ENCODE measurements at regions of chr2 and their contacts with region 1.

Region 1: DNA sequence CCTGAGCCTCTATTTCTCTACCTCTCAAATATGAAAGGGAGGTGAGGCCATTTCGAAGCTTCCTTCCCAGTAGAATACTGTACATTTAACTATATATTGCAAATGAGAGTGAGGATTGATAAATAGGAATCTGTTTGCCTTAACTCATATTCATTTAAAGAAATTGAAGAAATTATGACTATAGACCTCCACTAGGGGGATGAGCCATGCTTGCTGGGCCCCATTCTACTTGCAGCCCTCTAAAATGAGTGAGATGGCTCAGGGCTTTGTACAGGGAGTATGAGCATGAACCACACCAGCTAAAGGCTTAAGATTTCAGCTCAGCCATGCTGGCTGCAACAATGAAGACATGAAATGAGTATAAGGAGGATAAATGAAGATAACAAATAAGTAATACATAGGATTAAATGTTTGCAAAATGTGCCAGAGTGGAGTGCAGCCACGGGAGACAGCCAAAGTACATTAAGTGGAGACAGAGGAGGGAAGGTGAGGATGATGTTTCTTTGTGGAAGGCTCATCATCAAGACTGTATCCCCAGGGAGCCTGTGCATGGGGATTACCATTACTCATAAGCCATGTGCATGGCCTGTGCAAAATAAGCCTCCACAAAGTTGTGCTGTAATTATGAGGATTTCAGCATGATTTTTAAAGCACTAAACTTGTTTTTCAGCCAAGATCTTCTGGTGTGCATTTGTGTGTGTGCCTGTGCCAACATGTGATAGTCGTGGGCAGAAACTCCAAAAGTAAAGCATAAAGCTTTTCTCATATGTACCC is 300.8 kb downstream of the CNTNAP5 start:
- DNase-seq: peak; percentile 9
- ATAC-seq: peak; percentile 81
- H3K4me3 ChIP-seq: no peak overlapping the region
- H3K27ac ChIP-seq: no peak overlapping the region
- H3K4me1 ChIP-seq: no peaks in the 10 kb centered on the region
- H3K27me3 ChIP-seq: no peaks in the 10 kb centered on the region
- CTCF ChIP-seq: 0 out of 2 replicates have a peak, but pooled peaks have one; percentile 4
- EP300 ChIP-seq: no peak
- POLR2A ChIP-seq: no peak
- RAD21 ChIP-seq: no peak

Region 2: GRCh38 chr2:124566518-124566970 is 240.7 kb after region 1 on chr2:
- CTCF ChIA-PET with region 1: no interaction called
- POLR2A ChIA-PET with region 1: no interaction called
- in situ Hi-C with region 1: no loop called
- intact Hi-C with region 1: no loop called
- DNase-seq: peak; percentile 99
- ATAC-seq: peak; percentile 89
- H3K4me3 ChIP-seq: no peak overlapping the region
- H3K27ac ChIP-seq: peak overlapping the region; percentile 60
- H3K4me1 ChIP-seq: peaks cover 63% of the 10 kb centered on the region
- H3K27me3 ChIP-seq: no peaks in the 10 kb centered on the region
- CTCF ChIP-seq: no peak
- EP300 ChIP-seq: peak; percentile 89 to 97; a peak in 3 of 4 replicates
- POLR2A ChIP-seq: no peak
- RAD21 ChIP-seq: no peak

Region 3: GRCh38 chr2:124810132-124810531 is 484.3 kb after region 1 on chr2:
- CTCF ChIA-PET with region 1: no interaction called
- POLR2A ChIA-PET with region 1: no interaction called
- in situ Hi-C with region 1: no loop called
- intact Hi-C with region 1: loop called (anchors 1 kb)
- DNase-seq: peak; percentile 60
- ATAC-seq: peak; percentile 95
- H3K4me3 ChIP-seq: no peak overlapping the region
- H3K27ac ChIP-seq: no peak overlapping the region
- H3K4me1 ChIP-seq: no peaks in the 10 kb centered on the region
- H3K27me3 ChIP-seq: no peaks in the 10 kb centered on the region
- CTCF ChIP-seq: peak; percentile 79
- EP300 ChIP-seq: no peak
- POLR2A ChIP-seq: no peak
- RAD21 ChIP-seq: peak; percentile 45